PC-9 (cell line): ENCODE measurements at regions of chr10 and their contacts with region 1.

Region 1: DNA sequence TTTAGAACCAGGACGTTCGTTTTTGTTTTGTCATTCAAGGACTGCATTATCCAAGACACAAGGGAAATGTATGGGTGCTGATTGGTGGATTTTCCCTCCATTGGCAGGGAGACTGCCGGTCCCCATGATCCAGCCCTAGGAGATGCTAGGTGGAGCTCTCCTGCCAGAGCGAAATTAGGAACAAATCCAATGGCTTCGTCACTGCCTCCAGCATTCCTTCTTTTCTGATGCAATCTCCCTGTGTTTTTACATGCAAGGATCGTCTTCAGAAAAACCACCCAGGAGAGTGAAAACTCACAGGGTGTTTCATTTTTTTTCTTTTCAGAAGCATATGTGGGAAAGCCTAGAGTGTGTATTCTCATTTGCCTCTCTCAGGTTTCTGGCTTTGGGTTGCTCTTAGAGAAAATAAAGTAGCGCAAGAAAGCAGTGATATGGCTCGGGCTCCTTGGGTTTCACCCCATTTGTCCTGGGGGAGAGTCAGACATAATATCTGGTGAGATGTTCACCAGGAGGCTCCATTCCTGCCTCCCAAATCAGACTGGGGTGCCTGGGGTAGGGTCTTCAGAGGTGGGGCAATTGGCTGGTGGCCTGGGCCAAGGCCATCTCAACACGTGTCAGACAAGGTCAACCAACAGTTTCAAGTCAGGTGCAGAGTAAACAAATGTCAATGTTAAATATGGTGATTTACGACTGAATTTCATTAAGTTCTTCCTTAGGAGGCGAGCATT is 450.9 kb upstream of the MKI67 start:
- DNase-seq: no peak
- H3K4me3 ChIP-seq: no peak overlapping the region
- H3K27ac ChIP-seq: no peak overlapping the region
- H3K4me1 ChIP-seq: no peaks in the 10 kb centered on the region
- H3K27me3 ChIP-seq: peaks cover 39% of the 10 kb centered on the region
- CTCF ChIP-seq: no peak

Region 2: DNA sequence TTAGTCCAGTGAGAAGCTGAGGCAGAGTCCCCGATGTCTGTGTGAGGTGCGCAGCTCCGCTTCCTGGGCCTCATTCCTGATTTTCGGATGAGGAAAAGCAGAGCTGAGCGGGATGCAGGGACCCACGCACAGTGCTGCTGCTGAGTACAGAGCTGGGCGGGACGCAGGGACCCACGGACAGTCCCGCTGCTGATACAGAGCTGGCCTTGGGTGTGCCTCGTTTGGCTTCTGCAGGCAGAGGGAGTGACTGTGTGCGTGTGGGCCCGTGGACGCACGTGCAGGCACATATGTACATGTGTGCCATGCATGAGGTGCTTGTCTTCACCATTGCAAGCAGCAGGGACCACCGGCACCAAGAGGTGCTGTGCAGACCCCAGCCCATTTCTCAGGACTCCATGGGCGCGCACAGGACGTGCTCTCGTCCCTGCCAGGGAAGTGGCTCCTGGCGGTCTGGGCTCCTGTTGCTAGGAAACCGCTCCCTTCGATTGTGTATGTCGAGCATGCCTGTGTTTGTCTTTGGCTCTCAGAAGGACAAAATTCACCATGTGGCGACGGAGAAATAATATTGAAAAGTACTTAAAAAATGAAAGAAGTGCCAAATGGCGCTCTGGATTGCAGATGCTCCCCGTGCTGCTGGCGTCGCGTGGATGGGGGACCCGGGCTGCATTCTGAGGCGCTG is 147.1 kb before region 1 on chr10:
- CTCF ChIA-PET with region 1: no interaction called
- POLR2A ChIA-PET with region 1: interaction called, 28 read pairs
- intact Hi-C with region 1: no loop called
- DNase-seq: no peak
- H3K4me3 ChIP-seq: no peak overlapping the region
- H3K27ac ChIP-seq: no peak overlapping the region
- H3K4me1 ChIP-seq: no peaks in the 10 kb centered on the region
- H3K27me3 ChIP-seq: peaks cover 30% of the 10 kb centered on the region; the same call in 1 of the 2 replicates
- CTCF ChIP-seq: no peak